Left cardiac atrium (tissue), 4 donors: ENCODE measurements at regions of chr1 and their contacts with region 1.

Region 1: DNA sequence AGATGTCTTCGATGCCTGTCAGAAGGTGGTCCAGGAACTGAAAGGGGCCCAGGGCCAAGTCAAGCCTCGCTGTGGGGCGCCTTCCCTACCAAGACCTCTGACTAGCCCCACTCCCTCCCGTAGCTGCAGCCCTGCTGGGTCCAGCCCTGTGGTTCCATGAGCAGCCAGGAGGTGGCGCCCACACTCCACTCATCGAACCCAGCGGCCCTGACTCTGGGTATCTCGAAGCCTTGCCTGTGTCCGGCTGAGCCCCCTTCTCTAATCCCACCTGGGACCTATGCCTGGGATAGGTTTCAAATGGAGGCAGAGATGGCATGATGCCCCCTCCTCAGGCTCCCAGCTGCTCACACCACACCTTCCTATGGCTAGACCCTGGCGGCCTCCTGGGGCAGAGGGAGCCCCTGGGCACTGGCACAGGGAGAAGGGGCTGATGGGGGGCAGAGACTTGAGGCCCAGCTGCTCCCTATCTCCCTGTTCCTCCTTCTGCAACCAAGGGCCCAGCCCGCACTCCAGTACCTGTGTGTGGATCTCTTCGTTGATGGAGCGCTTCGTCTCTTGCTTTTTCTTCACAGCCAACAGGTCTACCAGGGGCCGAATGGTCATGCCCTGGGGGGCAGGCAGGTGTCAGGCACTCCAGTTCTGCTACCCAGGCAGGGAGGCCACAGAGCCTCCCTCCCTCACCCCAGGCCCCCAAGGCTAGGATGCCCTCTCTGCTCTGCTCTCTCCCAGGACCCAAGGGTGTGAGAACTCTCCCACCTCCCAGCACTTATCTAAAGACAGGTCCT is 52.0 kb downstream of the SLC9A1 start:
- DNase-seq: peak; percentile 78
- ATAC-seq: peak; percentile 28 to 29

Region 2: GRCh38 chr1:27154991-27155781 is 52.3 kb after region 1 on chr1 and contains the start of gene SLC9A1:
- intact Hi-C with region 1: loop called in 1 of 2 experiments (anchors 5 kb)
- DNase-seq: peak; percentile 96
- ATAC-seq: peak; percentile 90 to 91
- total RNA-seq, gene SLC9A1: 17.4 to 37.3 TPM

Region 3: GRCh38 chr1:27192039-27192529 is 89.2 kb after region 1 on chr1:
- intact Hi-C with region 1: loop called (anchors 5 kb)
- DNase-seq: no peak
- ATAC-seq: peak in 1 of 2 donors; percentile 41

Region 4: DNA sequence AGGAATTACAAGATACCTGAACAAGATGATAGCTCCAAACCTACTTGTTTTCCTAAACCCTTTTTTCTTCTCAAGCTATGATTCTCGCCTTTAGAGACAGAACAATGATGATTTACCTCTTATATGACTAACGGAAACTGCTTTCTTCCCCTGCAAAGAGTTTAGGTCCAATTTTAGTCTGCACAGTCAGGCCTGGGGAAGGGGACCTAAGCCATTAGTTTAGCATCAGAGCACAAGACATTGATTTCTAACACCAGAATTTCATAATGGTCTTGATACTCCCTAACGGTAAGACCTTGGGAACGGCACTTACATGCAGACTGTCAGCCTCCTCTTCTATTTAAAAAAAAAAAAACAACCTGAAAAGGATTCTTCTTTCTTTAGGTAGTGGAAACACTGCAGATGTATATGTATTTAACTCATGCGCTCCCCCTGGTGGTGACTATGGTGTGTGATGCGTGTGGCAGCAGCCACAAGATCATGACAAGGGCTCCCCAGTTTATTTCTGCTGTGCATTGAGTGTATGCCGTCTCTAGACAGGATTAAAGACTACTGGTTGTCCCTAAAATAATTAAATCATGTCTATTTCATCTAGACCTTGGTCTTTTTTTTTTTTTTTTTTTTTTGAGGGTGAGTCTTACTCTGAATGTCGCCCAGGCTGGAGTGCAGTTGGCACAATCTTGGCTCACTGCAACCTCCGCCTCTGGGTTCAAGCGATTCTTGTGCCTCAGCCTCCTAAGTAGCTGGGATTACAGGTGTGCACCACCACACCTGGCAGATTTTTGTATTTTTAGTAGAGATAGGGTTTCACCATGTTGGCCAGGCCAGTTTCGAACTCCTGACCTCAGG is 181.8 kb after region 1 on chr1:
- intact Hi-C with region 1: loop called (anchors 2 to 5 kb)
- DNase-seq: peak; percentile 89
- ATAC-seq: peak; percentile 86 to 87

Region 5: DNA sequence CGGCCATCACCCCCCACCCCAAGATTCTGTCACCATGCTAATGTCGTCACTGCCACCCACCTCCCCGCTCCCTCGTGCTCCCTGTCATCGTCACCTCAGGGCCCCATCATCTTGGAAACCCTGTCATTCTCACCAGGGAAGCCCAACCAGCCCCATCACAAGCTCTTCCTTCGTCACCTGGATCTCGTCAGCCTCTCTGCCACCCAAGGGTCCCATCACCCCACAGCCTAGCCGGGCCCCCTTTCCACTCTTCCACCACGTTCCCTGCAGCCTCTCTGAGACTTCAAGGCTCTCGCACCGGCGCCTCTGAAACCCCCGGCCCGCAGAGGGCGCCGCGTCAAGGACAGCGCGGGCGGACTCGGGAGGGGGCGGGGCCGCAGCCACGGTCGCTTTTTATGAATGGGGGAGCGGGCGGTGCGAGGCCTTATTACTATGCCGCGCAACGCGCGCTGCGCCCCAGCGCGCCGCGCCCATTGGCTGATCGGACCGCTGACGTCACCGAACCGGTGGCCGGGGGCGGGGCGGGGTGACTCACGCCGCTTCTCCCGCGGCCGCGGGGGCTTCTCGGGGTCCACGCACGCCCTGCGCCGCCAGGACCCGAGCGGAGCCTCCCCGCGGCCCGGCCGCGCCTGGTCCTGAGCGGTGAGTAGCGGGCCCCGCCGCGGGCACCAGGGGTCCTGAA is 289.3 kb after region 1 on chr1 and contains the start of gene GPR3:
- intact Hi-C with region 1: loop called in 1 of 2 experiments (anchors 10 kb)
- DNase-seq: peak; percentile 95
- ATAC-seq: peak; percentile 94
- total RNA-seq, gene GPR3: 1.7 to 12.4 TPM